Activated CD4-positive, alpha-beta memory T cell treated with anti-CD3 and anti-CD28 coated beads, Interleukin-2, amount 10 ng/mL, durations not matched to agents 7 days and 5 days (primary cell): ENCODE measurements at regions of chr6 and their contacts with region 1.

Region 1: DNA sequence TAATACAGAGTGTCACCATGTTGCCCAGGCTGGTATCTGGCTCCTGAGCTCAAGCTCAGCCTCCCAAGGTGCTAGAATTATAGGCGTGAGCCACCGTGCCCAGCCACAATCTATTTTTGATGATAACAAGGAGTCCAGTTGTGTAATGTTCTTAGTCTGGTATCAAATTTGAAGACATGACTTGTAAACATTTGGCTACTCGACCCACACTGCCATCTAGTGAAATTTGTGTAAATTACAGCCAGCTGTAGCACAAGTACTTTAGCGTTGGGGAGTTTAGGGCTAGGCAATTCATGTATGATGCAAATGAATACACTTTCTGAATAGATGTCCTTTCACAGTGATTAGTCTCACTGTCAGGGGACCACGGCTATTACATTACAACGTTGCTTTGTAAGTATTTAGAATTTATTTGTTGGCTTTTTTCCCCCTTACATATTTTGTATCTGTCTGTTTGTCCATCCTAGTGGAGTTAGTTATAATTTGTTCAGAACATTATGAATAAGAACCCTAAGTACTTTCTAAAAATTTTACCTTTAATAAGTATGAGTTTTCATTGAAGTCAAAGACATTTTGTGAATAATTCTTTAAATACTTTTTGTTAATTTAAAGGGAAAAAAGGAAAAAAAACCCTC is 139.7 kb downstream of the PRDM13 start:
- DNase-seq: peak; percentile 53
- H3K4me3 Mint-ChIP-seq: no peak overlapping the region
- H3K27ac Mint-ChIP-seq: no peak overlapping the region
- H3K4me1 Mint-ChIP-seq: no peaks in the 10 kb centered on the region
- H3K27me3 Mint-ChIP-seq: peaks cover 26% of the 10 kb centered on the region

Region 2: DNA sequence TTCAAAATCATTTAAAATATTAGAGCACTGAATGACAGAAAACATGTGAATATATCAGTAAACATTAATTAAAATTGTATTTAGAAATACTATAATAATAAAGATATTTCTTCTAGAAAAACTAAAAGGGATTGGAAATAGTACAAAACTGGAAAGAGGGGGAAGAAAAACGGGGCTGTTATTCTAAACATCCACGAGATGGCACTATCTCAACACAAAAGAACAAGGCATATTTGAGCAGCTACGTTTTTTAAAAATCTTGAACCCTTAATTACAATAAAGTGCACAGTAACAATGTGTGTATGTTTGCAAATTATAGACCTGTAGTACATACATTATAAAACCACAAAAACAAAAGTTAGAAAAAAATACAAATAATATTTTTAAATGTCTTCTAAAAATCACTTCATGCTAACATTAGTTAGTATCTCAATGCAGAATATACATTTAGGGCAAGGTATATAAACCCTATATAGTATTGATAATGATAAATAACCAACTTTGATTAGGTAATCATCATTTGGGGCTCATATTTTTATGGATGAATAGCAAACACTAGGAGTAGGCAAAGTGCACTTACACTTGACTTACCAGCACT is 278.8 kb before region 1 on chr6:
- CTCF ChIA-PET with region 1: interaction called, 20 read pairs
- POLR2A ChIA-PET with region 1: no interaction called
- DNase-seq: no peak
- H3K4me3 Mint-ChIP-seq: no peak overlapping the region
- H3K27ac Mint-ChIP-seq: no peak overlapping the region
- H3K4me1 Mint-ChIP-seq: no peaks in the 10 kb centered on the region
- H3K27me3 Mint-ChIP-seq: no peaks in the 10 kb centered on the region

Region 3: DNA sequence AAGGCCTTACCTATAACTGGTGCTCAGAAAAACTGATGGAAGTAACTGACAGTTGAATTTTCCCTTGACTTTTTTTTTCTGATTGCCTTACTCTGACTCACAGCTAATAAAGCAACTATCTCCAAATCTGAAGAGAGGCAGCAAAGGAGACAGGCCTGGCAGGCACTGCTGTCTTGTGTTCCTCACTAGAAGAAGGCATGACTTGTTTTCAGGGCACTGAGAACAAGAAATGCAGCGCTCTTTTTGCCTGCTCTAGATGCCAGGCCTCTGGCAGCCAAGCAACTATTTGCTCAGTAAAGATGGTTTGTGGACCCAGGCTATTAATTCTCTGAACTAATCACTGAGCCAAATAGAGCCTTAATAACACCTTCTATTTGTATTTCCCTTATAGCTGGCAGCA is 15.3 kb after region 1 on chr6:
- CTCF ChIA-PET with region 1: interaction called, 11 read pairs
- POLR2A ChIA-PET with region 1: no interaction called
- DNase-seq: no peak
- H3K4me3 Mint-ChIP-seq: no peak overlapping the region
- H3K27ac Mint-ChIP-seq: no peak overlapping the region
- H3K4me1 Mint-ChIP-seq: no peaks in the 10 kb centered on the region
- H3K27me3 Mint-ChIP-seq: peaks cover 12% of the 10 kb centered on the region